CD4-positive, alpha-beta memory T cell (primary cell): ENCODE measurements at regions of chr14 and their contacts with region 1.

Region 1: GRCh38 chr14:22556990-22557623 is 31.9 kb downstream of the DAD1 start:
- DNase-seq: peak; percentile 87 to 96 (median 91)
- H3K4me3 ChIP-seq: peak overlapping the region; percentile 80 to 85
- H3K4me3 Mint-ChIP-seq: peak overlapping the region; percentile 77 to 96 (median 88)
- H3K27ac ChIP-seq: peak overlapping the region; percentile 97
- H3K27ac Mint-ChIP-seq: peak overlapping the region; percentile 98 to 100 (median 100)
- H3K4me1 ChIP-seq: peaks cover 97% of the 10 kb centered on the region
- H3K4me1 Mint-ChIP-seq: peaks cover 75 to 97% (median 86%) of the 10 kb centered on the region in 4 donors
- H3K27me3 ChIP-seq: no peaks in the 10 kb centered on the region
- H3K27me3 Mint-ChIP-seq: peaks cover 2 to 4% of the 10 kb centered on the region in 2 donors

Region 2: DNA sequence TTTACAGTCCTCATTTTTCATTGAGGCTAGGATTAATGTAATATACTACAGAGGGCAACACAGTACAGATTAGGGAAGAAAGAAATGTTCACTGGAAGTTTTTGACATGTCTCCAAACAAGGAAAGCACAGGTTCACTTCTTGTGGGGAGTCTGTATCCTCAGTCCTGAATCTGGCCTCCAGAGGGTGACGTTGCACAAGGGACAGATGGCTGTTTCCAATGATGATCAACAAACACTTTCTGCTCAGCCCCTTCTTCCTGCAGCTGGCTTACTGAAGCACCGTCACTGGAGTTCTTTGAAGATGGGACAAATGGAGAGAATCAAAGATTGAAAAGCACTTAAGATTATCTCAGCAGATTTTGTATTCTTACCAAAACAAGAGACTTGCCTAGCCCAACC is 760.2 kb before region 1 on chr14:
- CTCF ChIA-PET with region 1: interaction called, 3 read pairs
- POLR2A ChIA-PET with region 1: interaction called, 17 read pairs
- intact Hi-C with region 1: no loop called
- DNase-seq: peak in 3 of 5 donors; percentile 7 to 18 (median 10)
- H3K4me3 ChIP-seq: no peak overlapping the region
- H3K4me3 Mint-ChIP-seq: peak overlapping the region; percentile 1 to 72 (median 34)
- H3K27ac ChIP-seq: no peak overlapping the region
- H3K27ac Mint-ChIP-seq: peak overlapping the region in 4 of 7 donors; percentile 8 to 74 (median 44)
- H3K4me1 ChIP-seq: no peaks in the 10 kb centered on the region
- H3K4me1 Mint-ChIP-seq: peaks cover 0 to 3% (median 0%) of the 10 kb centered on the region in 4 donors
- H3K27me3 ChIP-seq: peaks cover 2% of the 10 kb centered on the region
- H3K27me3 Mint-ChIP-seq: peaks cover 9 to 16% of the 10 kb centered on the region in 2 donors

Region 3: GRCh38 chr14:21917699-21918436 is 639.2 kb before region 1 on chr14:
- CTCF ChIA-PET with region 1: interaction called, 14 read pairs
- POLR2A ChIA-PET with region 1: interaction called, 42 read pairs
- intact Hi-C with region 1: loop called (anchors 2 kb)
- DNase-seq: peak; percentile 52 to 63 (median 60)
- H3K4me3 ChIP-seq: peak overlapping the region in 1 of 2 donors; percentile 0
- H3K4me3 Mint-ChIP-seq: peak overlapping the region; percentile 55 to 86 (median 82)
- H3K27ac ChIP-seq: peak overlapping the region; percentile 35
- H3K27ac Mint-ChIP-seq: peak overlapping the region; percentile 44 to 95 (median 58)
- H3K4me1 ChIP-seq: peaks cover 64% of the 10 kb centered on the region
- H3K4me1 Mint-ChIP-seq: peaks cover 18 to 65% (median 38%) of the 10 kb centered on the region in 4 donors
- H3K27me3 ChIP-seq: no peaks in the 10 kb centered on the region
- H3K27me3 Mint-ChIP-seq: no peaks in the 10 kb centered on the region

Region 4: DNA sequence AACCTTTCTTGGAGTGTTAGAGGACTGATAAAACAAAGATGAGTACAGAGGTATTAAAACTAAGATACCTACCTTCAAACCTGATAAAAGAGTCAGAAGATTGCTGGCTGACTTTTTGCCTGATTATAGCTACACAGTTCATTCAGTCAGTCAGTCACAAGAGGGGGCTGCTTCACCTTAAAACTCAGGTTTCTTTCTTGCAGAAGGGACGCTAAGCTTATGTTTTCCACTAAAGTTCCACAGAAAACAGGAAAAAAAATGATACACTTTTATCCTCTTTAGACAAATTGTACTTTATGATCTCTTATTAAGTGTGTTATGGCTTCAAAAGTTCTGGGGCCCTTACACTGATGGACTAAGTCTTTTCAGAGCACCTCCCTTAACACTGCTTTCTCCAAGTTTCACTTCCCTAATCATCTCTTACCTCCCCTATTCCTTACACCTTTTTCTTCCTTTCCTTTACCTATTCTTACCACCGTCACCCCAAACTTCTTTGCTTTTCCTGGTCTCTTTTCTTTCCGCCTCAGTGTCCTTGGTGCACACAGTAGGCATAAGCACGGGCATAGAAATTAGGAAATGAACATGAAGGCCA is 434.8 kb before region 1 on chr14:
- CTCF ChIA-PET with region 1: interaction called, 15 read pairs
- POLR2A ChIA-PET with region 1: interaction called, 28 read pairs
- intact Hi-C with region 1: loop called (anchors 2 kb)
- DNase-seq: peak in 1 of 5 donors; percentile 32
- H3K4me3 ChIP-seq: no peak overlapping the region
- H3K4me3 Mint-ChIP-seq: peak overlapping the region; percentile 70 to 86 (median 78)
- H3K27ac ChIP-seq: peak overlapping the region; percentile 46
- H3K27ac Mint-ChIP-seq: peak overlapping the region; percentile 82 to 95 (median 88)
- H3K4me1 ChIP-seq: peaks cover 4% of the 10 kb centered on the region
- H3K4me1 Mint-ChIP-seq: peaks cover 2 to 12% (median 6%) of the 10 kb centered on the region in 4 donors
- H3K27me3 ChIP-seq: no peaks in the 10 kb centered on the region
- H3K27me3 Mint-ChIP-seq: no peaks in the 10 kb centered on the region

Region 5: GRCh38 chr14:22502007-22502406 is 55.1 kb before region 1 on chr14:
- CTCF ChIA-PET with region 1: interaction called, 27 read pairs
- POLR2A ChIA-PET with region 1: interaction called, 1,528 read pairs
- intact Hi-C with region 1: loop called (anchors 2 kb)
- DNase-seq: no peak
- H3K4me3 ChIP-seq: peak overlapping the region; percentile 43 to 62
- H3K4me3 Mint-ChIP-seq: peak overlapping the region; percentile 86 to 96 (median 90)
- H3K27ac ChIP-seq: peak overlapping the region; percentile 67
- H3K27ac Mint-ChIP-seq: peak overlapping the region; percentile 87 to 100 (median 94)
- H3K4me1 ChIP-seq: peaks cover 67% of the 10 kb centered on the region
- H3K4me1 Mint-ChIP-seq: peaks cover 25 to 93% (median 30%) of the 10 kb centered on the region in 4 donors
- H3K27me3 ChIP-seq: no peaks in the 10 kb centered on the region
- H3K27me3 Mint-ChIP-seq: no peaks in the 10 kb centered on the region

Region 6: DNA sequence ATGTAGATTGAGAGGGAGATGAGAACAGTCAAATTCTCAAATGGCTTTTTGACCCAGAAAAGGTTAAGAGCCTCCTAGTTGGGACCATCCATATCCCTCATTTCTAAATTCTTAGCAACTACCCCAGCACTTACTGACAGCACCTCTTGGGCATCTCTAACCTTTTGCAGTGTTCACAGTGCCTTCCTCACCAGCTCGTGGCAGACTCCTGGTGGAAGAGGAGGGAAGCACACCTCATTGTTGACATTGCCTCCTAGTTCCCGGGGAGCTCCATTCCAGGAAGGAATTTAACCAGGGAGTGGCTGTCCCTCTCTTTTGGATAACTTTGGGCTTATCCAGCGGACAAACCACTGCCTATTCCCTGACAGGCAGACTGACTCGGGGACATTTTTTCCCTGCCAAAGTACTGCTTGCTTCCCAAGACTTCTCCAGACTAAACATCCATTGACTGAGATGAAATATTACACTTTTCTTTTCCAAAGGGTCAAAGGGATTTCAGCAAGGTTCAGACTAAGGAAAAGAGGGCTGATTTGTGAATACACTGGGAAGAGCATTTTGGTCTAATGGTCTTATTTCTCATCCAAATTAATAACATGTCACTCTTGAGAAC is 96.0 kb after region 1 on chr14:
- CTCF ChIA-PET with region 1: interaction called, 13 read pairs
- POLR2A ChIA-PET with region 1: interaction called, 10 read pairs
- intact Hi-C with region 1: loop called (anchors 1 kb)
- DNase-seq: peak; percentile 35 to 48 (median 43)
- H3K4me3 ChIP-seq: no peak overlapping the region
- H3K4me3 Mint-ChIP-seq: no peak overlapping the region
- H3K27ac ChIP-seq: no peak overlapping the region
- H3K27ac Mint-ChIP-seq: peak overlapping the region in 1 of 7 donors; percentile 10
- H3K4me1 ChIP-seq: no peaks in the 10 kb centered on the region
- H3K4me1 Mint-ChIP-seq: no peaks in the 10 kb centered on the region
- H3K27me3 ChIP-seq: no peaks in the 10 kb centered on the region
- H3K27me3 Mint-ChIP-seq: no peaks in the 10 kb centered on the region